ENCODE measurements at regions of chr3 and their contacts with region 1.

Region 1: GRCh38 chr3:177359593-177360357 is 162.5 kb upstream of the TBL1XR1 start:
- DNase-seq: peak; percentile 92 to 98 (median 96)
- ATAC-seq: peak; percentile 86
- H3K4me3 ChIP-seq: peak overlapping the region; percentile 60
- H3K4me3 Mint-ChIP-seq: peak overlapping the region; percentile 98
- H3K27ac ChIP-seq: peak overlapping the region; percentile 94 to 98
- H3K27ac Mint-ChIP-seq: peak overlapping the region; percentile 100
- H3K4me1 ChIP-seq: peaks cover 44% of the 10 kb centered on the region
- H3K4me1 Mint-ChIP-seq: peaks cover 57% of the 10 kb centered on the region
- H3K27me3 ChIP-seq: no peaks in the 10 kb centered on the region
- H3K27me3 Mint-ChIP-seq: peaks cover 13% of the 10 kb centered on the region
- CTCF ChIP-seq: no peak

Region 2: DNA sequence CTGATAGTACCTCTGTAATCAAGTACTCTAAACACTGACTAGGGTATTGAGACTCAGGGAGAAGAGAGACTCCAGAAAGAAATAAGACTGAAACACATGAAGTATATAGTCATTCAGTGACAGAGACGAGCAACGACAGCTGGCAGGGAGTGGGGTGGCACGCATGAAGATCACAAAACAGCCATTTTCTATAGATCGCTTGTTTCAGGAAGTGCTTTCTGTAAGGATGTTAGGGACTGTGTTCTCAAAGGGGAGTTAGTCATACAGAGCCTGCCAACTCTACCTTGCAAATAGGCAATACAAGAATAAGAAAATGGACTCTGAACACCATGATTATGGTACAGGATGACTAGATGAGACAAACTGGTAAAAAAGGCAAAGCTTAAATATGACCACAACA is 302.0 kb before region 1 on chr3:
- CTCF ChIA-PET with region 1: interaction called, 25 read pairs
- POLR2A ChIA-PET with region 1: interaction called, 82 read pairs
- intact Hi-C with region 1: no loop called
- DNase-seq: peak in 12 of 14 experiments; percentile 3 to 67 (median 22)
- ATAC-seq: peak; percentile 97
- H3K4me3 ChIP-seq: no peak overlapping the region
- H3K4me3 Mint-ChIP-seq: no peak overlapping the region
- H3K27ac ChIP-seq: no peak overlapping the region
- H3K27ac Mint-ChIP-seq: no peak overlapping the region
- H3K4me1 ChIP-seq: peaks cover 5% of the 10 kb centered on the region
- H3K4me1 Mint-ChIP-seq: peaks cover 36% of the 10 kb centered on the region
- H3K27me3 ChIP-seq: no peaks in the 10 kb centered on the region
- H3K27me3 Mint-ChIP-seq: no peaks in the 10 kb centered on the region
- CTCF ChIP-seq: no peak

Region 3: DNA sequence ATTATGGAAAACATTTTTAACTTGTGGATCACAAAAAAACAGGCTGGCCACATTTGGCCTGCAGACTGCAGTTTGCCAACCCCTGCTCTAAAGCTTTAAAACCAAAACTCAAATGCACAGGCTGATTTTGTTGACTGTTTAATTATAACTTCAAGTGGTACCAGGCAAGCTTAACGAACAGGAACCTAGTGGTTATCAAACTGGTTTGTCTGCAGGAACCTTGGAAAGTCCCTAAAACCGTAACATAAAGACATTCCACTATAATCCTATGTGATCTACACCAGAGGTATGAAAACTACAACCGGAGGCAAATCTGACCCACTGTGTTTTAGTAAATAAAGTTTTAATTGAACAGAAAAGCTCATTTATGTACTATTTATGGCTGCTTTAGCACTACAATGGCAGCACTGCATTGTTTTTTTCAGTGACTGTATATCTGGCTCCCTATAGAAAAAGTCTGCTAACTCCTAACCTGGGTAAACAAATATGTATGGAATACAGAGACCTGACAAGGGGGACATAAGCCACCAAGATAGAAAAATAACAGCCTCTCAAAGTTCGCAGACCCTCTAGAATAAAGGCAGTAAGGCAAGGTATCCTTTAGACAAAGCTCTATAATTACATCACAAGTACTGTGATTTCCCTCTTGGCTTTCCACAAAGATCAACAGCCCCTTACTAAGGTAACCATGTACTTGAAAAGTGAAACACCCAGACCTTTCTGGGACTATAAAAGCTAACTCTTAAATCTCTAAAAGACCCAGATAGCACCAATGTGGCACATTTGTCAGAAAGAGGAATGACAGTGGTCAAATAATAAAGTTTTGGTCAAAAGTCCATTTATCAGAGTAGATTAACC is 214.6 kb before region 1 on chr3:
- CTCF ChIA-PET with region 1: no interaction called
- POLR2A ChIA-PET with region 1: interaction called, 27 read pairs
- intact Hi-C with region 1: loop called in 1 of 2 experiments (anchors 1 kb)
- DNase-seq: peak in 3 of 14 experiments; percentile 70 to 81 (median 79)
- ATAC-seq: peak; percentile 81
- H3K4me3 ChIP-seq: peak overlapping the region; percentile 8
- H3K4me3 Mint-ChIP-seq: peak overlapping the region; percentile 65
- H3K27ac ChIP-seq: peak overlapping the region; percentile 39 to 53
- H3K27ac Mint-ChIP-seq: peak overlapping the region; percentile 90
- H3K4me1 ChIP-seq: peaks cover 46% of the 10 kb centered on the region
- H3K4me1 Mint-ChIP-seq: peaks cover 83% of the 10 kb centered on the region
- H3K27me3 ChIP-seq: no peaks in the 10 kb centered on the region
- H3K27me3 Mint-ChIP-seq: no peaks in the 10 kb centered on the region
- CTCF ChIP-seq: no peak

Region 4: DNA sequence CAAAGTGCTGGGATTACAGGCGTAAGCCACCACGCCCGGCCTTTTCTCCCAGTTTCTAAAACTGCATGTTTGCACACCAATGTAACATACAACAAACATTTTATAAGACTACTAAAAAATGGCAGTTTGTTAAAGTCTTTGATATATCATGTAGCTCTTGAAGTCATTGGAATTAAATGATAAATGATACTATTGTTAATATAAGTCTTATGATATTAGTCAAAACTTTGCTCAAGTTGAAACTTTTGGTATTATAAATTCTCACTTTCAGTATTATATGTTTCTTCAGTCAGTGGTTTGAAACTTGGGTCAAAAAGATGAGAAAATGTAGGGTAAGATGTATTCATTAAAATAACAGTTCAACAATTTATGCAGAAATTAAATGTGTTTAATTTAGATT is 44.9 kb before region 1 on chr3:
- CTCF ChIA-PET with region 1: no interaction called
- POLR2A ChIA-PET with region 1: interaction called, 7 read pairs
- intact Hi-C with region 1: loop called in 1 of 2 experiments (anchors 5 kb)
- DNase-seq: no peak
- ATAC-seq: no peak
- H3K4me3 ChIP-seq: no peak overlapping the region
- H3K4me3 Mint-ChIP-seq: no peak overlapping the region
- H3K27ac ChIP-seq: no peak overlapping the region
- H3K27ac Mint-ChIP-seq: no peak overlapping the region
- H3K4me1 ChIP-seq: no peaks in the 10 kb centered on the region
- H3K4me1 Mint-ChIP-seq: peaks cover 13% of the 10 kb centered on the region
- H3K27me3 ChIP-seq: no peaks in the 10 kb centered on the region
- H3K27me3 Mint-ChIP-seq: no peaks in the 10 kb centered on the region
- CTCF ChIP-seq: no peak

Region 5: DNA sequence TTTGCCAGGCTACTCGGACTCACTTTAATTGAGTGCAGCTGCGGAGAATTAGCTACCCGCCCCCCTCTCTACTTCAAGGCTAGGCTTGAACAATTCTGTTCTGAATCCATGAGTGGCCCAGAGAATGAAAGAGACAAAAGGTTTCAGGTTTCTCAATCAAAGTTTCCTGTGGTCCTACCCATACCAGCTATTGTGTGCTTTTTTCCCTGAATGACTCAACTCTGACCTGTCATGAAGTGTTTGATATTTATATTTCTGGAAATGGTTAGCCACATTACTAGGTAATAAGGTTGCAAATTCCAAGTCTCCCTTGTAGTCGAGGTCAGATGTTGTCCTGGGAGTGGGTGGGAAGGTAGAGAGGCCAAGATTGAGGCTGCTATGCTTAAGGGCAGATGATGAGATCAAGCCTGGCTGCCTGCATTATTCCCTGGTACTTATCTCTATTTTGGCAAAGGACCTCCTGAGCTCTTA is 230.2 kb after region 1 on chr3:
- CTCF ChIA-PET with region 1: no interaction called
- POLR2A ChIA-PET with region 1: no interaction called
- intact Hi-C with region 1: loop called (anchors 5 to 10 kb)
- DNase-seq: no peak
- ATAC-seq: no peak
- H3K4me3 ChIP-seq: no peak overlapping the region
- H3K4me3 Mint-ChIP-seq: no peak overlapping the region
- H3K27ac ChIP-seq: no peak overlapping the region
- H3K27ac Mint-ChIP-seq: no peak overlapping the region
- H3K4me1 ChIP-seq: peaks cover 13% of the 10 kb centered on the region
- H3K4me1 Mint-ChIP-seq: peaks cover 33% of the 10 kb centered on the region
- H3K27me3 ChIP-seq: no peaks in the 10 kb centered on the region
- H3K27me3 Mint-ChIP-seq: no peaks in the 10 kb centered on the region
- CTCF ChIP-seq: no peak

Region 6: DNA sequence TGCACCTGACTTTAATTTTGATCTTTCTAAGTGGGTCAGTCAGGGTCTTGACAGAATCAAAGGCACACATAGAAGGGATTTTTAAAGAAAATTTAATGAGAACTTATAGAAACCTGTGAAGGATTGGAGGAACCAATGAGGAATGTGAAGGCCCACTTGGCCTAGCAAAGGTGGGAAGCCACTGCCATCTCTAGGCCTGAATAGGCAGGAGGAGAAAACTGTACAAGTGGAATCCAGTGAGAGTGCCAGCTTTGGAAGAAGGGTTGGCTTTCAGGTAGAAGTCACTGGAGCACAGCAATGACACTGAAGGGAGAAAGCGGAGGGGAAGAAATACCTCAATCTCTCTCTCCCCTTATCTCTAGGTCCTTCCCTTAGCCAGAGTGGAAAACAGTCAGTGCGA is 795.7 kb after region 1 on chr3:
- CTCF ChIA-PET with region 1: no interaction called
- POLR2A ChIA-PET with region 1: interaction called, 7 read pairs
- intact Hi-C with region 1: loop called in 1 of 2 experiments (anchors 10 kb)
- DNase-seq: peak in 1 of 14 experiments; percentile 7
- ATAC-seq: no peak
- H3K4me3 ChIP-seq: no peak overlapping the region
- H3K4me3 Mint-ChIP-seq: no peak overlapping the region
- H3K27ac ChIP-seq: no peak overlapping the region
- H3K27ac Mint-ChIP-seq: no peak overlapping the region
- H3K4me1 ChIP-seq: no peaks in the 10 kb centered on the region
- H3K4me1 Mint-ChIP-seq: no peaks in the 10 kb centered on the region
- H3K27me3 ChIP-seq: no peaks in the 10 kb centered on the region
- H3K27me3 Mint-ChIP-seq: no peaks in the 10 kb centered on the region
- CTCF ChIP-seq: no peak